Activated CD4-positive, alpha-beta T cell treated with anti-CD3 and anti-CD28 coated beads, Interleukin-2, amount 10 ng/mL, durations not matched to agents 24 days and 14 days (primary cell): ENCODE measurements at regions of chr11 and their contacts with region 1.

Region 1: DNA sequence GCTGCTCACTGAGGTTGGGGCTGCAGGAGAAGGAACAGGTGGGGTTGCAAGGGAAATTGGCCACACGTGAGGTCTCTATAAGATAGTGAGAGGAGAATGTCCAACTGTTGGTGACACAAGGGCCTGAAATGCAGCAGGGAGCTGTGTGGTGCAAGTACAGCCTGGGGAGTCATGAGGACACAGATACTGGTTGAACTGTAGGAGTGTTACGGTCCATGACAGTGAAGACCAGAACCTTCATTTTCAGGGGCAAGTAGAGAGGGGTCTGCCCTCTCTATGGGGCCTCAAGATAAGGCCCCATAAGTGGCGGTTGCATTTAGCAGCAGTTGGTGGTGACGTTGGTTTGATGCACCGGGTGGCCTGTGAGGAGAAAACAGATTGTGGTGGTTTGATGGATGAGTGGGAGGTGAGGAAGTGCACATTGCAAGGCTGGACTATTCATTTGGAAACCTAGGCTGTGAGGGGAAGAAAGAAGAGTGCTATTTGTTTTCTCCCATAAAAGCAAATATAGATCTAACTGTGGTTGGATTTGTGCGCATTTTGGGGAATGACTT is 39.4 kb downstream of the MICAL2 start:
- DNase-seq: peak; percentile 80
- H3K4me3 Mint-ChIP-seq: peak overlapping the region; percentile 58
- H3K27ac Mint-ChIP-seq: peak overlapping the region; percentile 98
- H3K4me1 Mint-ChIP-seq: peaks cover 76% of the 10 kb centered on the region
- H3K27me3 Mint-ChIP-seq: no peaks in the 10 kb centered on the region

Region 2: DNA sequence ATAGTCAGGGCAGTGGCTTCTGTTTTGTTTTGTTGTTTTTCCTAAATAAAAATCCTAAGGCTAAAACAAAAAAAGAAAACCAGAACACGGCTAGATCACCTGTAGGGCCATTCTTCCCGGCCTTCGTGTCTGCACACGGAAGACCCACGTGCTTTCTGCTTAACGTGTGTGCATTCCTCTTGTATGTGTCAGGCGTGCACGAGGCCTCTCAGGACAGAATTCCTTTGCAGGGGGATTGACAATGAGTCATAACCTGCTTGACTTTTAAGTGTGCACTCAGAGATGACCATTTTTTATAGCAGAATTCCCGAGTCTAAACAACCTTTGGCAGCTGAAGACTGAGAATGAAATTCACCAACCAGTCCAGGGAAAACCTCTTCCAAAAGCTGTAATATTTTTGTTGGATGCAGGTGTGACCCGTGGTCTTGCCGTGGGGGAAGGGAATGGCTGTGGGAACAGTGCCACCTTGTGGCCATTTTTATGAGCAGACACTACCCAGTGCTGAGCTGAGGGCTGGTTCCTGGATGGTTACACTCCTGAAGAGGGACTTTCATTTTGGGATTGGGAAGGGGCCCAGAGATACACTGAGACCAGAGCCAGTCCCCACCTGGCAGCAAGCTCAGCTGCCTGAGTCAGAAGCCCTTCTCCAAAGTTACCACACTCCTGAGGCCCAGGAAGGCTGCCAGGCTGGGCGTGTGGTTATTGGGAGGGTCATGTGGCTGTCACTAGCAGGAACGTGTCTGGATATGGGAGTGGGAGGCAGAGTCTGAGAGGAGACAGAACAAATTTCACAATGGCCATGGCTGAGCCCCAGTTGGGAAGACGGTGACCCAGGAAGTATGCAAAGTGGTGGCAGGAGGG is 105.6 kb before region 1 on chr11:
- intact Hi-C with region 1: loop called (anchors 2 kb)
- DNase-seq: peak; percentile 90
- H3K4me3 Mint-ChIP-seq: no peak overlapping the region
- H3K27ac Mint-ChIP-seq: peak overlapping the region; percentile 2
- H3K4me1 Mint-ChIP-seq: peaks cover 19% of the 10 kb centered on the region
- H3K27me3 Mint-ChIP-seq: peaks cover 16% of the 10 kb centered on the region

Region 3: DNA sequence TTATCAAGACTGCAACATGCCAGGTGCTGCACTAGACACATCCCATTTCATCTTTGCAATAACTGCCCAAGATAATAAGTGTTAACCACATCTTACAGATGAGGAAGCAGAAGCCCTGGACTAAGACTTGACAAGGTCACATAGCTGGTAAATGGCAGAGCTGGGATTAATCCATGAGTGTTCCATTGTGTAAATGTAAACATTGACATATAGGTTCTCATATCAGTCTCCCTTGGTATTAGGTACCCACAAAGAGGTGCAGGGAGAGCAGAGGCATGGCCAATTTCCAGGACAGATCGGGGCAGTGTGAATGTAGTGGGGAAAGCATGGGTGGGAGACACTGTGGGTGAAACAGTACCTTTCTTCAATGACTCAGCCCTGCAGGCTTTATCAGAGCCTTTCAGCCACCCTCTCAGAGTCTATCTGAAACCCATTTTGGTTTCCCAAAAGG is 21.4 kb before region 1 on chr11:
- intact Hi-C with region 1: loop called (anchors 2 kb)
- DNase-seq: no peak
- H3K4me3 Mint-ChIP-seq: no peak overlapping the region
- H3K27ac Mint-ChIP-seq: peak overlapping the region; percentile 73
- H3K4me1 Mint-ChIP-seq: peaks cover 75% of the 10 kb centered on the region
- H3K27me3 Mint-ChIP-seq: no peaks in the 10 kb centered on the region

Region 4: GRCh38 chr11:12174477-12175143 is 24.9 kb after region 1 on chr11:
- intact Hi-C with region 1: loop called (anchors 1 kb)
- DNase-seq: peak; percentile 74
- H3K4me3 Mint-ChIP-seq: peak overlapping the region; percentile 78
- H3K27ac Mint-ChIP-seq: peak overlapping the region; percentile 94
- H3K4me1 Mint-ChIP-seq: peaks cover 71% of the 10 kb centered on the region
- H3K27me3 Mint-ChIP-seq: no peaks in the 10 kb centered on the region

Region 5: DNA sequence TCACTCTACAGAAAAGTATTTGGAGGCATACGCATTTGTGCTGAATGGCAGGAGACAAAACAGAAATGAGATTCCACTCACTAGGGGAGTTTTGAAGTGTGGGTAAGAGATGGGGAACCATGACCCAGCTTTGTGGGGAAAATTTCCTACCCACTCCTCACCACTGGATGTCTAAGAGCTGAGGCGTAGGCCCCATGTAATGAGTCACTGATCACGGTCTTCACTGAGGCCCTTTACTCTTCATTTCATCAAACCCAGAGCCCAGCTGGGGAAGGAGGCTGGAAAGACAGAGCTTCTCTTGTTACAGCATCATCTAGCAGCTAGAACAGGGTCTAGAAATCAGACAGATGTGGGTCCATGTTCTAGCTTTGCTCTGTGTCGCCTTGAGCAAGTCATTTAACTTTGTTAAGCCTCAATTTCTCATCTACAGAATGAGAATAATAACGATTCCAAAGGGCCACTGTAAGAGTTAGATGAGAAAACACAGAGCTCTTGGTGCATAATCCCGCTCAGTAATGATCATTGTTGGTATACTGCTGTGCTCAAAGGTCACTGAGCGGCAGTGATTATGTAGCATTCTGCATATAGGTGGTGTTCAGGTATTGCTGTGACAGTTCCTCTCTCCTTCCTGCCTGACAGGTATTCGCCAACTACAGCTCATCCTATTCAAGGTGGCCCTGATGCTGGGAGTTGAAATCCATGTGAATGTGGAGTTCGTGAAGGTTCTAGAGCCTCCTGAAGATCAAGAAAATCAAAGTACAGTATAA is 57.8 kb after region 1 on chr11:
- intact Hi-C with region 1: loop called (anchors 1 kb)
- DNase-seq: peak; percentile 68
- H3K4me3 Mint-ChIP-seq: peak overlapping the region; percentile 68
- H3K27ac Mint-ChIP-seq: peak overlapping the region; percentile 95
- H3K4me1 Mint-ChIP-seq: peaks cover 68% of the 10 kb centered on the region
- H3K27me3 Mint-ChIP-seq: no peaks in the 10 kb centered on the region